Dendritic cell treated with granulocyte-macrophage colony-stimulating factor and Interleukin-4, amounts not matched to agents 40 ng/mL and 50 ng/mL, for 4 days (primary cell): ENCODE measurements at regions of chr2 and their contacts with region 1.

Region 1: GRCh38 chr2:69525261-69525660 is 88.0 kb upstream of the NFU1 start:
- H3K4me3 Mint-ChIP-seq: no peak overlapping the region
- H3K27ac Mint-ChIP-seq: no peak overlapping the region
- H3K4me1 Mint-ChIP-seq: no peaks in the 10 kb centered on the region
- H3K27me3 Mint-ChIP-seq: no peaks in the 10 kb centered on the region

Region 2: DNA sequence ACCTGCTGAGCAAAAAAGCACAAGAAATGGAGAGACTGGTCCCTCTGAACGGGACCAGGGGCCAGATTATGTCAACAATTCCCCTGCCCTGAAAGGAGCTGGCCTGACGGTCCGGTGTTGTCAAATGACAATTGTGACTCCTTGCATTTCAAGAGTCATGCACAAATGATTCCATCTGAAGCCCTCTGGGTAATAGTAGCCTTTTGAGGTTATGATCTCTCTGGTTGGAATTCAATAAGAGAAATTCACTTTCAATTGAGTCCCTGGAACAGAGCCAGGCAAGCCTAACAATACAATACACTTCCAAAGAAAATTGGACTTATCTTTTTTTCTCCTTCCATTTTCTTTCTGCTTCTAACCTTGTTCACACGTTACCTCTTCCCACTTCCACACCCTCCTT is 1579.3 kb before region 1 on chr2:
- intact Hi-C with region 1: no loop called
- H3K4me3 Mint-ChIP-seq: no peak overlapping the region
- H3K27ac Mint-ChIP-seq: no peak overlapping the region
- H3K4me1 Mint-ChIP-seq: peaks cover 4% of the 10 kb centered on the region
- H3K27me3 Mint-ChIP-seq: peaks cover 3% of the 10 kb centered on the region

Region 3: DNA sequence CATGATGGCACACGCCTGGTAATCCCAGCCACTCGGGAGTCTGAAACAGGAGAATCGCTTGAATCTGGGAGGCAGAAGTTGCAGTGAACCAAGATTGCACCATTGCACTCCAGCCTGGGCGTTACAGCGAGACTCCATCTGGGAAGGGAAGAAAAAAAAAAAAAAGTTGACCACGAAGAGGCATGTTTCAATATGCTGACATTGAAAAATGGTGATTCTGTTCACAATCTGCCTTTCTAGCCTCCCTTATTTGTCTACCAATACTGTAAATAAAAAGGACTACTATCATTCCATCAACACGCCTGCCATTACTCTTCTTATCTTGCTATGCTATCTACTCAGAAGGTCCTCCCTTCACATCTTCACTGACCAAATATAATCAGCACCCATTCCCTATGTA is 156.7 kb before region 1 on chr2:
- intact Hi-C with region 1: loop called (anchors 10 kb)
- H3K4me3 Mint-ChIP-seq: no peak overlapping the region
- H3K27ac Mint-ChIP-seq: no peak overlapping the region
- H3K4me1 Mint-ChIP-seq: peaks cover 12% of the 10 kb centered on the region
- H3K27me3 Mint-ChIP-seq: no peaks in the 10 kb centered on the region